A549 (cell line): ENCODE measurements at regions of chr12 and their contacts with region 1.

Region 1: DNA sequence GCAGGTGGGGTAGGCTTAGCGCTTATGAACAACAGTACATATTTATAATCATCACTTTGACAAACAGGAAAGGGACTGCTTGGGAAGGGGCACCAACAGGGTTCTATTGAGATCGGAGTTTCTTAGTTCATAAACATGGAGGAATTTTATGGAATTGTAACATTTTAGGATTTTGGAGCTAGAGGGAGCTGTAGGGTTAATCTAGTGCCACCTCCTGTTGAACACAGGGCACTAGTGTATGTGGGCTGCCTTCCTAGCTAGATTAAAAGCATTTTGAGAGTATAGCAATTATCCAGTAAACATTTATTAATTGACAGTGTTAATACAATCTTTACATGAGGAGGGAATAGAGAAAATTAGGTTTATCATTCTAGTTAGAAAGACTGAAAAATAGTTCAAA is 23.1 kb upstream of the TBC1D30 start:
- DNase-seq: peak; percentile 44 to 45
- ATAC-seq: peak; percentile 92
- H3K4me3 ChIP-seq: no peak overlapping the region
- H3K27ac ChIP-seq: no peak overlapping the region
- H3K4me1 ChIP-seq: peaks cover 19% of the 10 kb centered on the region
- CTCF ChIP-seq: peak; percentile 64
- EP300 ChIP-seq: no peak
- POLR2A ChIP-seq: no peak
- RAD21 ChIP-seq: peak; percentile 42 to 49; a peak in 4 of 5 replicates

Region 2: GRCh38 chr12:64596252-64596793 is 205.1 kb before region 1 on chr12:
- CTCF ChIA-PET with region 1: no interaction called
- POLR2A ChIA-PET with region 1: no interaction called
- DNase-seq: no peak
- ATAC-seq: no peak
- H3K4me3 ChIP-seq: no peak overlapping the region
- H3K27ac ChIP-seq: no peak overlapping the region
- H3K4me1 ChIP-seq: no peaks in the 10 kb centered on the region
- CTCF ChIP-seq: no peak
- EP300 ChIP-seq: no peak
- POLR2A ChIP-seq: no peak
- RAD21 ChIP-seq: no peak

Region 3: DNA sequence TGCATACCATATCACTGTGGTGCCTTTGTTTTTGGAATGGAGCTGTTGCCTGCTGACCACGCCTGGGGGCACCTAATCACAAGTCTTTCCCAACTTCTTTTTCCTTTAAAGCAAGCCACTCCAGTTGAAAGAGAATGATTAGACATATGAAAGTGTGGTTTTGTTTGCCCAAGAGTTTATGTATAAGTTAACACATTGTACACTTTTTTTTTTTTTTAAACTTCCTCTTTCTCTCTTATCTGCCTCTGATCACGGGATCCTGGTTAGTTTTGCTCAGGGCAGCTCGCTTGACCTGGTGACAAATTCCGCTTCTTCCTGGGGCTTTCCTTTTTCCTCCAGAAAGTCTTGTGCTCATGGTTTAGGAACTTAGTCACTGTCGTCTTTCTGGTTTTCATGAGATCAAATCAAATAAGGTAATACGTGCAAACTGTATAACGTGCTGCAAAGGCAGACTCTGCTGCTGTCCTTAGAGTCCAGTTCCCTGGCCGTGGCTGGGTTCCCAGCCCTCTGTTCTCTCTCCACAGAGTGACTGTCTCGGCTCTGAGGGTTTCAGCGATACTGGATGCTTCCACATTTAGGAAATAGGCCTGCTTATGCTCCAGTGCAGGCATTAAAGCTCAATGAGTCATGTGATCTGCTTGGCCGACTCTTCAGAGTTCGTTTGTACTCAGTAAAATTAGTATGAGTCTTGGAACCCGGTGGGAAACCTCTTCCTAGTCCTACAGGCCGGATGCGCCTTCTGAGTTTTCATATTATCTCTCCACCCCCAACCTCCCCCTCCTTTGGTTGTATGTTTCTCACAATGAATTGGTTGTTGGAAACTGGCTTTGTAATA is 175.9 kb before region 1 on chr12:
- CTCF ChIA-PET with region 1: no interaction called
- POLR2A ChIA-PET with region 1: no interaction called
- DNase-seq: peak; percentile 76 to 92
- ATAC-seq: peak; percentile 95 to 96
- H3K4me3 ChIP-seq: peak overlapping the region; percentile 27
- H3K27ac ChIP-seq: peak overlapping the region; percentile 86 to 93
- H3K4me1 ChIP-seq: peaks cover 65% of the 10 kb centered on the region
- CTCF ChIP-seq: 0 out of 3 replicates have a peak, but pooled peaks have one; percentile 7
- EP300 ChIP-seq: peak; percentile 58 to 60; a peak in 2 of 5 replicates
- POLR2A ChIP-seq: 0 out of 2 replicates have a peak, but pooled peaks have one; percentile 14
- RAD21 ChIP-seq: peak; percentile 23 to 49

Region 4: GRCh38 chr12:64780531-64781279 is 20.7 kb before region 1 on chr12:
- CTCF ChIA-PET with region 1: interaction called, 33 read pairs
- POLR2A ChIA-PET with region 1: no interaction called
- DNase-seq: peak; percentile 33 to 44
- ATAC-seq: peak; percentile 86 to 88
- H3K4me3 ChIP-seq: peak overlapping the region; percentile 60
- H3K27ac ChIP-seq: peak overlapping the region; percentile 69 to 88; a peak in 5 of 6 replicates
- H3K4me1 ChIP-seq: peaks cover 8% of the 10 kb centered on the region; the same call in 2 of the 3 replicates
- CTCF ChIP-seq: no peak
- EP300 ChIP-seq: no peak
- POLR2A ChIP-seq: no peak
- RAD21 ChIP-seq: no peak

Region 5: GRCh38 chr12:64790222-64790621 is 11.2 kb before region 1 on chr12:
- CTCF ChIA-PET with region 1: interaction called, 22 read pairs
- POLR2A ChIA-PET with region 1: no interaction called
- DNase-seq: no peak
- ATAC-seq: no peak
- H3K4me3 ChIP-seq: no peak overlapping the region
- H3K27ac ChIP-seq: no peak overlapping the region
- H3K4me1 ChIP-seq: peaks cover under 1% of the 10 kb centered on the region; the same call in 2 of the 3 replicates
- CTCF ChIP-seq: no peak
- EP300 ChIP-seq: no peak
- POLR2A ChIP-seq: no peak
- RAD21 ChIP-seq: no peak

Region 6: DNA sequence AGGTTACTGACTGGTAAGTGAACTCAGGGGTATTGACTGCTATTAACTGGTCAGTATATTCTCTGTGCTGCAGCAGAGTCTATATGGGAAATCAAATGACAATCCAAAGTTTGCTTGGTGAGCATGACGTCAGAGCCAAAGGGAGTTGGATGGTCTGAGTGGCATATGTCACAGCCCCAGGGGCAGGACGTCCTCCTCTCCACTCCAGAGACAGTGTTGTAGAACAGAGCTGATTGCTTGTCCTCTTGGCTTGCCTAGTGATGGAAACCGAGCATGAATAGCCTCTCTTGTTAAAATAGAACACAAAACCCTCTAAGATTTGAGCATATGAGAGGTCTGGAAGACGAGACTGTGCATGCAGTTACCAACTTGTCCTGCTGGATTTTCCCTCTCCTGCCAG is 19.8 kb after region 1 on chr12:
- CTCF ChIA-PET with region 1: interaction called, 20 read pairs
- POLR2A ChIA-PET with region 1: no interaction called
- DNase-seq: no peak
- ATAC-seq: no peak
- H3K4me3 ChIP-seq: no peak overlapping the region
- H3K27ac ChIP-seq: no peak overlapping the region
- H3K4me1 ChIP-seq: peaks cover 11% of the 10 kb centered on the region; the same call in 2 of the 3 replicates
- CTCF ChIP-seq: no peak
- EP300 ChIP-seq: no peak
- POLR2A ChIP-seq: no peak
- RAD21 ChIP-seq: no peak

Region 7: DNA sequence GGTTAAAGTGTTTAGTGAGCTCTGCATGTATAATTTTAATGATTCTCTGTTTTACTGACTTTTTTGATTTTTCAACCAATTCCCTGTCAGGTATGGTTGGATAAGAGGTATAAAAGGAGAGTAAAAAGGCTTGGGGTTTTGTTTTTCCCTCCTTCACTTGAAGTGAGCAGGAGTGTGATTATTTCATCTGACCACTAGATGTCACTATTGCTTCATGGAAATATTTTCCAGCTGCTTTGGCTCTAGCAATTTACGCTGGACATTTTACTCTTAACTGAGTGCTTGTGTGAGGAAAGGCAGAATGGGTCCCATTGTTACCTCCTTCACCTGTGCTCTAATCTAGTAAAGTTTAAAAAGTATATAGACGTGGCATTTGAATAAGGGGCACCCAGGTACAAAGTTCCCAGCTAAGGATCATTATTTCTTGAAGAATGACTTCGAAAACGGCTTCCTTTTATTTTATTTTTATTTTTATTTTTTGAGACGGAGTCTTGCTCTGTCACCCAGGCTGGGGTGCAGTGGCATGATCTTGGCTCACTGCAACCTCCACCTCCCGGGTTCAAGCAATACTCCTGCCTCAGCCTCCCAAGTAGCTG is 89.6 kb after region 1 on chr12:
- CTCF ChIA-PET with region 1: interaction called, 20 read pairs
- POLR2A ChIA-PET with region 1: no interaction called
- DNase-seq: peak; percentile 44 to 62
- ATAC-seq: peak; percentile 68 to 87; a peak in 4 of 6 replicates
- H3K4me3 ChIP-seq: no peak overlapping the region
- H3K27ac ChIP-seq: no peak overlapping the region
- H3K4me1 ChIP-seq: no peaks in the 10 kb centered on the region
- CTCF ChIP-seq: peak; percentile 84
- EP300 ChIP-seq: no peak
- POLR2A ChIP-seq: no peak
- RAD21 ChIP-seq: peak; percentile 92 to 93

Region 8: GRCh38 chr12:65106948-65107347 is 305.6 kb after region 1 on chr12:
- CTCF ChIA-PET with region 1: interaction called, 36 read pairs
- POLR2A ChIA-PET with region 1: no interaction called
- DNase-seq: peak; percentile 12 to 15
- ATAC-seq: no peak
- H3K4me3 ChIP-seq: no peak overlapping the region
- H3K27ac ChIP-seq: no peak overlapping the region
- H3K4me1 ChIP-seq: no peaks in the 10 kb centered on the region
- CTCF ChIP-seq: peak; percentile 50
- EP300 ChIP-seq: no peak
- POLR2A ChIP-seq: no peak
- RAD21 ChIP-seq: peak; percentile 22 to 33; a peak in 2 of 5 replicates

Region 9: DNA sequence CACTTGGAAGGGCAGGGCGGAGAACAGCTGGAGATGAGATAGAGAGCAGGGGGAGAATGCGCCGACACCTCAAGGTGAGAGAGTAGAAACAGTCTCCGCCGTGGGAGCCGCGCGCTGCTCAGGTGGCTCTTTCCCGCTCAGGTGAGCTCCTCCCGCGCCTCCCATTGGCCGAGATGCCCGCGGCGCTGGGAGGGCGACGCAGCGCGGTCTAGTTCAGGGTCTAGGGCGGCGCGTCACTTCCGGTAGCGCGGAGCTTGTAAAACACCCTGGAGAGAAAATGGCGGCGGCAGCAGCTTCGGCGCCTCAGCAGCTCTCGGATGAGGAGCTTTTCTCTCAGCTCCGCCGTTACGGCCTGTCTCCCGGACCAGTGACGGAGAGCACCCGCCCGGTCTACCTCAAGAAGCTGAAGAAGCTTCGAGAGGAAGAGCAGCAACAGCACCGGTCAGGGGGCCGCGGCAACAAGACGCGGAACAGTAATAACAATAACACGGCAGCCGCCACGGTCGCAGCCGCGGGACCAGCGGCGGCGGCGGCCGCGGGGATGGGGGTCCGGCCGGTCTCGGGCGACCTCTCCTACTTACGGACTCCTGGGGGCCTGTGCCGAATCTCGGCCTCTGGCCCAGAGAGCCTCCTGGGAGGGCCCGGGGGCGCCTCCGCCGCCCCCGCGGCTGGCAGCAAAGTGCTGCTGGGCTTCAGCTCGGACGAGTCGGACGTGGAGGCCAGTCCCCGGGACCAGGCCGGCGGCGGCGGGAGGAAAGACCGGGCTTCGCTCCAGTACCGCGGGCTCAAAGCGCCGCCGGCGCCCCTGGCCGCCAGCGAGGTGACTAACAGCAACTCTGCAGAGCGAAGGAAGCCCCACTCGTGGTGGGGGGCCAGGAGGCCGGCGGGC is 368.2 kb after region 1 on chr12 and contains the start of gene LEMD3:
- CTCF ChIA-PET with region 1: interaction called, 11 read pairs
- POLR2A ChIA-PET with region 1: no interaction called
- DNase-seq: peak; percentile 94
- ATAC-seq: peak; percentile 94 to 96
- H3K4me3 ChIP-seq: peak within 1 kb of the TSS; percentile 97
- H3K27ac ChIP-seq: peak within 1 kb of the TSS; percentile 95
- H3K4me1 ChIP-seq: peaks cover 26% of the 10 kb centered on the region
- CTCF ChIP-seq: no peak
- EP300 ChIP-seq: no peak
- POLR2A ChIP-seq: peak; percentile 93
- RAD21 ChIP-seq: no peak
- polyA plus RNA-seq, gene LEMD3: 13.1 and 17.8 TPM in 2 replicates